Left ventricle myocardium superior (tissue), 1 donor: ENCODE measurements at regions of chr21 and their contacts with region 1.

Region 1: GRCh38 chr21:16084776-16085364 is 355.1 kb downstream of the USP25 start:
- DNase-seq: peak; percentile 61
- ATAC-seq: peak; percentile 89

Region 2: DNA sequence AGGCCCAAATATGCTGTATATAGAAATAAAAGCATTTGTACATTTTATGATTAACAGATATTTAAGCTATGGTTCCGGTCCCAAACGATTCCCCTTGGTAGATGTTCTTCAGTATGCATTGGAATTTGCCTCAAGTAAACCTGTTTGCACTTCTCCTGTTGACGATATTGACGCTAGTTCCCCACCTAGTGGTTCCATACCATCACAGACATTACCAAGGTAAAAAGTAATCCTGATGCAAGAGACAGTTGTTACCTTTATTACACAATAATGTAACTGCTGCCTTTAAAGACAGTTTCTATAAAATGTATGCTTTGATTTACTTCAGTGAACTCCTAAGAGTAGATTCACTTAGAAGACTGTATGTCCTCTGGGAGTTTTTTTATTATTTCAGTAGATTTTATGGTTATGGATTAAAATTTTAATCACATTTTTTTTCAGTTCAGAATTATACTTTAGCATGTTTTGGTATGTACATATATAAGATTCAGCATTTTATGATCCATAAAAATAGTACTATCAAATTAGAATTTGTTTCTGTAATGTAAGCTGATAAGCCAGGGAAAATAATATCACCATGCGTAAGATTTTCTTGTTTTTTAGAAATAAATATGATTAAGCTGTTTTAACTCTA is 258.6 kb before region 1 on chr21:
- intact Hi-C with region 1: no loop called
- DNase-seq: no peak
- ATAC-seq: peak; percentile 83

Region 3: DNA sequence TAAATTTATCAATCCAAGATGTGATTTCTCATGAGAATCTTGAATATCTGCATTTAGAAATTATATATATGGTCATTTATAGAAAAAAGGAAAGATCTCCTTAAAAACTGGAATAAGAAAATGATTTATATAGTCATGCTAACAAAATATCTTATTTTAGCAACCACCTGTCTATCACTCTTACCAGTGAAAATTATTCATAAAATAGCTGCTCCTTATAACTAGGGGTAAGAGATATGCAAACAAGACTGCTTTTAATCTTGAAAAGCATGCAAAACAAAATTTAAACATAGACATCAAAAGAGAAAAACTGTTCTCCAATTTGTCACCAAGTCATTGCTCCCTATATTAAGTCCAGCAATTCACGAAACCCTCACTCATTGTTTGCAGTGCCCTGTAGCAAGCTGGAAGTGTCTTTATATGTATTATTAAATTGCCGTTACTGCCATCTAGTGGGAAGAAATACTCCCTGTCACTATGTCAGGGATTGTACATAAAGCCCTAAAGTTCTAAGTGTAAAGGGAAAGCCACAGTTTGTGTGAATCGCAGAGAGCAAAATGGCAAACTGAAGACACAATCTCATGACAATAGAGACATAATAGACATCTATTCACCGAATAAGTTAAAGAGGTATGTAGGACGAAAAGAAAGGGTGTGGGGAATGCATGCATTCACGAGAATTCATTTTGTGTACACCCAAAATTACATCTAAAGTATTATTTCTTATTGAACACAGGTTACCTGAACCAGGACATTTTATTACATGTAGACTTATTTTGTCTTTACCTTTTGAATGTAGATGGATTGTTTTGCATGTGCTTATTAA is 245.4 kb after region 1 on chr21:
- intact Hi-C with region 1: loop called (anchors 2 kb)
- DNase-seq: no peak
- ATAC-seq: peak; percentile 98